ENCODE measurements at regions of chr20 and their contacts with region 1.

Region 1: GRCh38 chr20:13546497-13547131 is 92.1 kb downstream of the TASP1 start:
- DNase-seq: peak; percentile 48 to 65
- ATAC-seq: peak in 3 of 8 donors; percentile 44 to 57 (median 45)
- H3K4me3 ChIP-seq: no peak overlapping the region
- H3K27ac ChIP-seq: no peak overlapping the region
- H3K4me1 ChIP-seq: peaks cover 0 to 5% (median 0%) of the 10 kb centered on the region in 9 donors
- H3K27me3 ChIP-seq: no peaks in the 10 kb centered on the region
- CTCF ChIP-seq: peak; percentile 47 to 85 (median 84)

Region 2: DNA sequence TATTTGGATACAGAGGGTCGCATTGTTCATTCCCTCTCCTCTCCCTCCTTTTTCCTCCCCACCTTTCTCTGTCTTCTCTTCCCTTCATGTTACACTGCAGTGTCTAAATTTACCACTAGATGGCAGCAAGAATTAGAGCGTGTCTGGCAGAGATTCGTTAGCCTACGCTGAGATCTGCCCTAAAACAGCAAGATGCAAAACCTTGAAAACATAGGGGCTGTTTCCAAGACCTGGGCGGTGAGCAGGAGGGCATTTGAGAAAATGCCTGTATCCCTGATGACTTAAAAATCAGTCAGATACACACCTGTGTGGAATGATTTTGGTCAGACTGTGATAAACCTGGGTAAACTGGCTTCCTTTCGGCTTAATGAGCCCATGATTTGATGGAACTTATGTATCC is 427.0 kb before region 1 on chr20:
- intact Hi-C with region 1: loop called in 8 of 10 experiments (anchors 1 to 10 kb)
- DNase-seq: peak in 1 of 2 donors; percentile 40
- ATAC-seq: peak in 6 of 8 donors; percentile 27 to 88 (median 65)
- H3K4me3 ChIP-seq: no peak overlapping the region
- H3K27ac ChIP-seq: no peak overlapping the region
- H3K4me1 ChIP-seq: no peaks in the 10 kb centered on the region
- H3K27me3 ChIP-seq: peaks cover 0 to 4% (median 0%) of the 10 kb centered on the region in 7 donors
- CTCF ChIP-seq: peak; percentile 67 to 92 (median 87)

Region 3: DNA sequence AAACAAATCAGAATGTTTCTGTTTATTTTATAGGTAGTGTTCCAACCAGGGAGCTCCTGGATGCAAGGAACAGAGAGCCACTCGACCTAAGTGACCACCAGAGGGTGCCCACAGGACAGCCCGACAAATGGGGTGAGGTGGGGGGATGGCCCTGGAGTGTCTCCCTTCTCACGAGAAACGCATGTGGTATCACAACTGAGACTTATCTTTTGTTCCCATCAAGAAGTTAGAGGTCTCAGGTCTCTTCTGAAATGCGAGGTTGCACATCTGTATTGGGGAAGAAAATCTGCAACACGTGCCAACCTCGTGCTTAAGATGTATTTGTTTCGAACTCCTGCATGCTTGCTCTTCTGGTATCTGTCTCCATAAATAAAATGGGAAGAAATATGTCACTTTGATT is 221.6 kb before region 1 on chr20:
- intact Hi-C with region 1: loop called in 3 of 10 experiments (anchors 10 kb)
- DNase-seq: no peak
- ATAC-seq: no peak
- H3K4me3 ChIP-seq: no peak overlapping the region
- H3K27ac ChIP-seq: no peak overlapping the region
- H3K4me1 ChIP-seq: peaks cover 0 to 5% (median 0%) of the 10 kb centered on the region in 9 donors
- H3K27me3 ChIP-seq: peaks cover 0 to 5% (median 0%) of the 10 kb centered on the region in 7 donors
- CTCF ChIP-seq: peak in 7 of 9 donors; percentile 31 to 45 (median 39)

Region 4: DNA sequence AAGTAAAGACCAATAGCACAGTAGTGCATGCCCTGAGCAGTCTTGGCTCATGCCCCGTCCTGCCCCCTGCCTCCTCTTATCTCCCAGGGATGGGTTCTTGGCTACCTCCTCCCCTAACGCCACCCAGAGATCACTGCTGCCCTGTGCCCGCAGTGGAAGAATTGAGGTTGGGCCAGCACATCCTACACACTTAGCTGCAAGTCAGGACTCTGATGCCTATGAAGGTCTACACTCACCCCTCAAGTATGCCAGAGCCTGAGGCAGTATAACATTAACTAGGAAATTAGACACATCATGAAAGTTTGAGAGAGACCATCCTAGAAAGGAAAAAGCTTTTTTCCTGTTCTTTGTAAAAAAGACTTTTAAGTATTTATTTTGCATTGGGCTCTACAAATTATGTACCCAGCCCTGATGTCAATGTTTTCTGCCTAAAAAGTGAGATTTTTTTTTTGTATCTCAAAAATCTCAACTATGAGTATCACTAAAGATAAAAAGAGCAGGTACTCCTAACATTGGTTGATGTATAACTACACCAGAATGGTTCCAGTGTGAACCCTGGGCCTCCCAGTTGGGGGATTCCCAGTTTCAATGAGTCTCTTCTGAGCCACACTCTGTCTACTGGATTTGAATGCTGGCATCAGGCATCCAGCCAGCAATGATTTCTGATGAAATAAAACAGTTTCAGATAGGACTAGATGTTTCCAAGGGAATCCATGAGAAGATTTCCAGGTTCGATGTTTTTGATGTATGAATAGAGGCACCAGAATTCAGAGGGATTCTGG is 210.1 kb before region 1 on chr20:
- intact Hi-C with region 1: loop called in 1 of 10 experiments (anchors 10 kb)
- DNase-seq: no peak
- ATAC-seq: no peak
- H3K4me3 ChIP-seq: no peak overlapping the region
- H3K27ac ChIP-seq: no peak overlapping the region
- H3K4me1 ChIP-seq: no peaks in the 10 kb centered on the region
- H3K27me3 ChIP-seq: no peaks in the 10 kb centered on the region
- CTCF ChIP-seq: no peak

Region 5: DNA sequence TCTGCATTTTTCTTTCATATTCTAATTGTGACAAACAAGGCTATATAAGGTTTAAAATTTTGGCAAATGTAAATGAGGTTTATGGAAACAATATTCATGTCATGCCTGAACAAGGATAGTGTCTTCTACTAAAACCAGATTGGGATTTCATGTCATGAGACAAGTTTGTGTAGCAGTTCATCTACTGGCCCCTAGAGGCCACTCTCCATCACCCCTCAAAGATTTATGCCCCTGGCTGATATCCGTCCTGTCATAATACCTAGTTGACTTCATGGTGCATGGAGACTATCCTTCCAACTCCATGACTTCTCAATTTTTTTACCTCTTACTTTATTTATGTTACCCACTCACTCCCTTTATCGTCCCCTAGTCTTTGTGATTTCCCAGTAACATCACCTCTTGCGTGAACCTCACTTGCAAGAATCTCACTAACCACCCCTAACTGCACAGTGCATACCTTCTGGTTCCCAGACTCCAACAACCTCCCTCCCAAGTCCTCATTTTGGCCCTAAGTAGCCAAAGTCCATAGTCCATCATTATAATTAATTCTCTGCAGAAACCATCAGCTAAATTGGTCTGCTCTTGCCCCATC is 87.7 kb before region 1 on chr20:
- intact Hi-C with region 1: loop called in 4 of 10 experiments (anchors 5 to 10 kb)
- DNase-seq: no peak
- ATAC-seq: peak in 1 of 8 donors; percentile 58
- H3K4me3 ChIP-seq: no peak overlapping the region
- H3K27ac ChIP-seq: no peak overlapping the region
- H3K4me1 ChIP-seq: peaks cover 0 to 2% (median 0%) of the 10 kb centered on the region in 9 donors
- H3K27me3 ChIP-seq: no peaks in the 10 kb centered on the region
- CTCF ChIP-seq: peak; percentile 35 to 83 (median 72)

Region 6: DNA sequence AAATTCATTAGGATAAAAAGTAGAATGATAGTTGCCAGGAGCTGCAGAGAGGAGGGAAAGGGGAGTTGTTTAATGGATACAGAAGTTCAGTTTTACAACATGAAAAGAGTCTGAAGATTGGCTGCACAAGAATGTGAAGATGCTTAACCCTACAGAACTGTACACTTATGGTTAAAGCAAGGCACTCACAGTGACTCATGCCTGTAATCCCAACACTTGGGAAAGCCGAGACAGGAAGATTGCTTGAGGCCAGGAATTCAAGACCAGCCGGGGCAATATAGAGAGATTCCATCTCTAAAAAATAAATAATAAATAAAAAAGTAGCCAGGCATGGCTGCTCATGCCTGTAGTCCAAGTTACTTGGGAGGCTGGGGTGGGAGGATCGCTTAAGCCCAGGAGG is 81.9 kb before region 1 on chr20:
- intact Hi-C with region 1: loop called in 4 of 10 experiments (anchors 5 to 10 kb)
- DNase-seq: no peak
- ATAC-seq: no peak
- H3K4me3 ChIP-seq: no peak overlapping the region
- H3K27ac ChIP-seq: no peak overlapping the region
- H3K4me1 ChIP-seq: peaks cover 0 to 7% (median 0%) of the 10 kb centered on the region in 9 donors
- H3K27me3 ChIP-seq: no peaks in the 10 kb centered on the region
- CTCF ChIP-seq: no peak

Region 7: DNA sequence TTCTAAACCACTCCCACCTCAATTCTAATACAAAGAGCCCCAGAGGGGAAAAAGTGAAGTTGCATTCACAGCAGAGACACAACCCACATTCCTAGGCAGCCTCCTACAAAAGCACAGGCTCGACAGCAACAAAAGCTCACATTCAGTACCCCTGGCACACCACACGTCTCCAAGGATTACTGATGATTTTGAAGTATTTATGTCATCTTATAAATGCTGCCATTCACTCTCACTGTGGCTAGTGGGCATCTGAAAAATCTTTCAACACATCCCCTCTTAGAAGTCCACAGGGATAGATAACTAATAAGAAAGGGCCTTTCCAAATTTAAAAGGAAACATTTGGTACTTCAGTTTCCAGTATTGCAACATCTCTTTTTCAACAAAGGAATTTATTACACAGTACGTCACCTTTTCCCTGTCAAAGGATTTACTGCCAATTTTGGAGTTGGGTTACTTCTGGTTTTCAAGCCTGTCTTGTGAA is 54.6 kb before region 1 on chr20:
- intact Hi-C with region 1: no loop called
- DNase-seq: no peak
- ATAC-seq: peak in 7 of 8 donors; percentile 31 to 93 (median 72)
- H3K4me3 ChIP-seq: no peak overlapping the region
- H3K27ac ChIP-seq: no peak overlapping the region
- H3K4me1 ChIP-seq: peaks cover 0 to 14% (median 8%) of the 10 kb centered on the region in 9 donors
- H3K27me3 ChIP-seq: no peaks in the 10 kb centered on the region
- CTCF ChIP-seq: no peak

Region 8: DNA sequence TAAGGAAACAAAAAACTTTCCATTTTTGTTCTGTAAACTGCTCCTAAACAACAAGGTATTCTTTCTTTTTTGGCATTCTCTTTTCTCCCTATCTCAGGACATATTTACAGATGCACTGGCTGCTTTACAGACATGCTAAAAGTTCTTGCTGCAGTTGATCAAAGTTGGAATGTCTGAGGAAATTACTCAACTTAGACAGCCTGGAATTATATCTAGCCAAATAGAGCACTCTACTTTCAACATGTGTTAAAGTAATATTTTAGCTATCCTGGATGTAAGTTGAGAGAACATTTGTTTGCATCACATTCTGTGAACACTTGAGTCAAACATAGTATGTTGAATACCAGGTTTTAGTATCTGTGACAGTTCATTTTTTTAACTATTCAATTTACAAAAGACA is 67.3 kb after region 1 on chr20:
- intact Hi-C with region 1: no loop called
- DNase-seq: no peak
- ATAC-seq: no peak
- H3K4me3 ChIP-seq: no peak overlapping the region
- H3K27ac ChIP-seq: no peak overlapping the region
- H3K4me1 ChIP-seq: peaks cover 0 to 24% (median 4%) of the 10 kb centered on the region in 9 donors
- H3K27me3 ChIP-seq: no peaks in the 10 kb centered on the region
- CTCF ChIP-seq: no peak

Region 9: DNA sequence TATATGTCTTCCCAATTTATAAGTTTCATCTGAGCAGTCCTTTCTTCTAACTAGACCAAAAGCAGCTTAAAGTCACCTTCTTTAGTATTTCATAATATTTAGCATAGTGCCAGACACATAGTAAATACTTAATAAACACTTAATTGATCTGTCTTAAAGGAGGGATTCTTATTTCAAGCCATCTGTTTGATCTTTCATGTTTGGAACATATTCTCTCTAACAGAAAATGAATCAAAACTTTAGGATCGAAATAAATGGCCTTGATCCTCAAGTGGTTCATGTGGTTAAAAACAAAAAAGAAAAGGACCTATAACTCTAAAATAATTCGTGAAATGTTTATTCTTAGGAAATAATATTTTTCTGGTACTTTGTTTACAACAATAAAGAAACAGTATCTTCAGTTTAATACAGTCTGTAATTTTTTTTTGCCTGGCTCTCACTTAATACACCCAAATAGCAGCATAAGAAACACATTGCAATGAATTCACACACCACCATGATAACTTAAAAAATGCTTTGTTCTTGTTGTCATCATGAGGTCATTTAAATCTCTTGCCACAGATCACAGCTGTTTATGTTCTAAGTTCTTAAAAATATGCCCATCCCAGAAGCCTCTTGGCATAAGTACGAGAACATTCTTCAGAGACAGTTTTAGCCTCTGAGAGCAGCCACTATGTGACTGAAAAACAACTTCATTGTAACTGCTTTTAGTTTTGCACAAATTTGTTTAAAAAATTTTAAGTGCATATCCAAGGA is 190.0 kb after region 1 on chr20:
- intact Hi-C with region 1: no loop called
- DNase-seq: no peak
- ATAC-seq: peak in 7 of 8 donors; percentile 39 to 91 (median 80)
- H3K4me3 ChIP-seq: no peak overlapping the region
- H3K27ac ChIP-seq: peak overlapping the region in 9 of 10 donors; percentile 0 to 55 (median 27)
- H3K4me1 ChIP-seq: peaks cover 0 to 29% (median 11%) of the 10 kb centered on the region in 9 donors
- H3K27me3 ChIP-seq: no peaks in the 10 kb centered on the region
- CTCF ChIP-seq: no peak

Region 10: GRCh38 chr20:13771853-13772453 is 225.3 kb after region 1 on chr20:
- intact Hi-C with region 1: loop called in 1 of 10 experiments (anchors 10 kb)
- DNase-seq: no peak
- ATAC-seq: no peak
- H3K4me3 ChIP-seq: no peak overlapping the region
- H3K27ac ChIP-seq: no peak overlapping the region
- H3K4me1 ChIP-seq: no peaks in the 10 kb centered on the region
- H3K27me3 ChIP-seq: no peaks in the 10 kb centered on the region
- CTCF ChIP-seq: peak; percentile 13 to 70 (median 58)